ENCODE measurements at regions of chr10 and their contacts with region 1.

Region 1: DNA sequence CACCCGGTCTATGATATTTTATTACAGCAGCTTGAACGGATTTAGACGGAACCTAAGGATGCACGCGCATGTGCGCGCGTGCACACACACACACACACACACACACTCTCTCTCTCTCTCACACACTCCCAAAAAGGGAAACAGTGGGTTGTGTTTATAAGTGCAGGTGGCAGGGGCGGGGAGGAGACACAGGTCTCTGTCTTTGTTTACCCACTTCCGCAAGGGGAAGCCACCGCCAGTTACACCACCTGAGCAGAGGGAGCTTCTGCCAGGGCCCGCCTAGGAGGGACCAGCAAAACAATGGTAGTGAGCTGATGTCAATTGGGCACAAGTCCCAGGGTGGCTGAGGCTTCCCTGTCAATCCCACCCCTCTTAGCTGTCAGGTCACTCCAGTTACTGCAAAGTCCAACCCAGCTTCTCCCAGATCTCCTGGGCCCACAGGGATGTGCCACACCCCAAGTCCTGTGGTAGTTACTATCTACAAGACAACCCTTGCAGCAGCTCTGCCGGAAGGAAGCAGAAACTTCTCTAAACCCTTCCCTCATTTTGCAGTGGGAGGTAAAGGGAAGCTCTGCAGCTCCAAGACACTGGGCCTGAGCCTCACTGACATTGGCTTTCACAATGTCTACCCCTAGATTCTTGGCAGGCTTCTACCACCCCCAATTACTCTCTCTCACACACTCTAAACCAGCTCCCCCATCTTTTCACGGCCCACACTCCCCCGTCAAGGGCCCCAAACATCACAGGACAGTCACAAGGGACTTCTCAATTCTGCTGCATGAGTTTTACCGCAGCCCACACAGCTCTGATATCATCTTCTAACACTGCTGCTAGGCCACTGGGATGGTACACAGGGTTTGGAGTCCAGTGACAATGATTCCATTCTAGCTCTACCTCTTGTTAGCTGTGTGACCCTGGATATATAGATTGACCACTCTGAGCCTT is 17.6 kb downstream of the ANXA11 start:
- DNase-seq: peak; percentile 80
- CTCF ChIP-seq: no peak

Region 2: GRCh38 chr10:80025281-80025680 is 162.5 kb before region 1 on chr10:
- CTCF ChIA-PET with region 1: no interaction called
- POLR2A ChIA-PET with region 1: no interaction called
- DNase-seq: no peak
- CTCF ChIP-seq: no peak

Region 3: GRCh38 chr10:80174641-80175395 is 12.9 kb before region 1 on chr10:
- CTCF ChIA-PET with region 1: interaction called, 18 read pairs
- POLR2A ChIA-PET with region 1: interaction called, 4 read pairs
- DNase-seq: no peak
- CTCF ChIP-seq: no peak

Region 4: DNA sequence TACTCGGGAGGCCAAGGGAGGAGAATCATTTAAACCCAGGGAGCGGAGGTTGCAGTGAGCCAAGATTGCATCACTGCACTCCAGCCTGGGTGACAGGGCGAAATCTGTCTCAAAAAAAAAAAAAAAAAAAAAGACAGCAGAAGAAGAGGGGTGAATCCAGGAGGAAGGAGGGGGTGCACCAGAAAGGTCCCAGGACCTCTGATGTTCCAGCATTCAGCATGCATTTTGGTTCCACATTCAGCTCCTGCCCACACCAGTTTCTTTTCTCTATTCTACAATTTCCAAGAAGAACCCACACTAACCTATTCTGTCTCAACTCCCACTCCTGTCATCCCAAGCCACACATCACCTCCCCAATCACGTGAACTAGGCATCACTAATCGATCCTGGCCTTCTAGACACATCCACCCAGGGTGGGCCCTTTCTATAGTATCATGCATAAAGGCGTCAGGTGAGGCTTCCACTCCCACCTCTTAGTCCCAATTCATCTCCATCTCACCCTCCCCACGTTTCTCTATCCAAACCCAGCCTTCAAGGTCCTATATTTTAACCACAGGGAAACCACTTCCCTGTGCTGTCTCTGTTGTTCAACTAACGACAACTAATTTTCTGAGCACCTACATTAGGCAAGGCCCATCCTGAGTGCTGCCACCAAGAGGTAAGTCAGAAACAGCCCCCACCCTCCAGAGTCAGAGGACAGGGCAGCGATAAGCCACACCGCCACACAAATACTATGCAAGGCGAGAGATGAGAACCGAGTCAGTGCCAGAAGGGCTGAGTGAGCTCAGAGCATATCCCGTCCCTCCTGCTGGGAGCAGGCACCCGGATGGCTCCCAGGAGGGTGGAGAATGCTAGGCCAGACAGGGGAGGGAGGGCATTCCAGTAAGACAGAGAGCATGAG is 15.4 kb after region 1 on chr10:
- CTCF ChIA-PET with region 1: interaction called, 10 read pairs
- POLR2A ChIA-PET with region 1: interaction called, 14 read pairs
- DNase-seq: peak; percentile 77
- CTCF ChIP-seq: peak; percentile 71

Region 5: GRCh38 chr10:80296942-80297341 is 109.2 kb after region 1 on chr10:
- CTCF ChIA-PET with region 1: no interaction called
- POLR2A ChIA-PET with region 1: no interaction called
- DNase-seq: no peak
- CTCF ChIP-seq: no peak